ENCODE measurements at regions of chr2 and their contacts with region 1.

Region 1: DNA sequence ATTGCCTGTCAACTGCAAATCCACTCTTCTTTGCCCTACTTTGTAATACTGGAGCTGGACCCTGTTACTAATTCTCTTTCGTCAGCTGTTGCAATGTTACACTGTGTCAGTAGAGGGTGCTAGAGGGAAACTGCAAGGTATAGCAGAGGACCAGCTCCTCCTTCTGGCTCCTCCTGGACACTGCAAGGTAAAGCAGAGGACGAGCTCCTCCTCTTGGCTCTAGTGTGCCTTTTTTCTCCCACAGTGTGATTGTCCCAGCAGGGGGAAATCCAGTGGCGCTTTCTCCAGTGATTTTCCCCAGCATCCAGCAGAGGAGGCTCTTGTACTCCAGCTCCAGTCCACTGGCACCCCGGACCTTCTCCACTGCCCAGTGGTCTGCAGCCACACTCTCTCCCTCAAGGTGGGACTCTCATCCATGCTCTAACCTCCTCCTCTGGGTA is 95.6 kb downstream of the CAPN13 start:
- DNase-seq: peak; percentile 95
- H3K4me3 ChIP-seq: no peak overlapping the region
- H3K27ac ChIP-seq: no peak overlapping the region
- H3K4me1 ChIP-seq: no peaks in the 10 kb centered on the region
- H3K27me3 ChIP-seq: no peaks in the 10 kb centered on the region
- CTCF ChIP-seq: peak; percentile 95 to 98 (median 97)
- POLR2A ChIP-seq: no peak

Region 2: GRCh38 chr2:30178618-30179434 is 532.8 kb before region 1 on chr2:
- intact Hi-C with region 1: loop called (anchors 10 kb)
- DNase-seq: peak; percentile 81
- H3K4me3 ChIP-seq: no peak overlapping the region
- H3K27ac ChIP-seq: peak overlapping the region in 1 of 2 donors; percentile 60
- H3K4me1 ChIP-seq: peaks cover 8% of the 10 kb centered on the region
- H3K27me3 ChIP-seq: no peaks in the 10 kb centered on the region
- CTCF ChIP-seq: no peak
- POLR2A ChIP-seq: no peak

Region 3: GRCh38 chr2:30208452-30208851 is 503.2 kb before region 1 on chr2:
- intact Hi-C with region 1: loop called (anchors 10 kb)
- DNase-seq: peak; percentile 76
- H3K4me3 ChIP-seq: no peak overlapping the region
- H3K27ac ChIP-seq: no peak overlapping the region
- H3K4me1 ChIP-seq: peaks cover 4% of the 10 kb centered on the region
- H3K27me3 ChIP-seq: no peaks in the 10 kb centered on the region
- CTCF ChIP-seq: peak; percentile 79 to 89 (median 82)
- POLR2A ChIP-seq: no peak

Region 4: DNA sequence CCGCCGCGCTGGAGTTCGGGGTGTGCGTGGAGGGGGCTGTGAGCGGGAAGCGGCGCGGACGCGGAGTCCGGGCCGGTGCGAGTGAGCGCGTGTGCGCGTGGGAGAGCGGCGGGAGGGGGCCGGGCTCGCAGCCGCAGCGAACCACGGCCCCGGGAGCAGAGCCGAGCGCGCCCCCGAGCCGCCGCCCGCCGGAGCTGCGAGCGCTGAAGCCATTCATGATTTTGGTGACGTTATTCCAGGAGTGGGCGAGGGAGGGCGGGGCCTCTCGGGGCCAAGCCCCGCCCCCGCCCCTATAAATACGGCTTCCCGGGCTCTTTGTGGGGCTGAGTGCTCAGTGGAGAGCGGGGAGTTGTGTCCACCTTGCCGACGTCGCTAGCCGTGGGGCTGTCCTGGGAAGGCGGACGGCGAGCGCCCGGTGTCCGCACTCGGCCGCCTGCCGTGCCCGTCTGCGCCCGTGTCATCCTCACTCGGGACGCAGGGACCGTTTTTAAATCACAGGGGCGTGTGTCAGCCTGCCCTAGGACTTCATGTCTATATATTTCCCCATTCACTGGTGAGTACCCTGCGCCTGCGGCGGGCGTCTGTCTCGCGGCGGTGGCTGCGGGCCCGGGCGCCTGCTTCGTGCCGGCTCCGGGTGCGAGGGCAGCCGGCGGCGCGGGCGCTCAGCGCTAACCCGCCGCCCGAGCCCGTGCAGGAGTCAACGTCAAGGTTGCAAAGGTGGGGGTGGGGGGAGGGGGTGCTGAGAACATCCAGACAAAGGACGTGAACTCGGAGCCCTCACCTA is 480.3 kb before region 1 on chr2 and contains the start of gene LBH:
- intact Hi-C with region 1: loop called (anchors 10 kb)
- DNase-seq: peak; percentile 92
- H3K4me3 ChIP-seq: peak within 1 kb of the TSS; percentile 70 to 73
- H3K27ac ChIP-seq: peak within 1 kb of the TSS; percentile 57 to 88
- H3K4me1 ChIP-seq: peaks cover 13% of the 10 kb centered on the region
- H3K27me3 ChIP-seq: no peaks in the 10 kb centered on the region
- CTCF ChIP-seq: no peak
- POLR2A ChIP-seq: peak; percentile 77
- total RNA-seq, gene LBH: 23.9 to 32.1 TPM

Region 5: DNA sequence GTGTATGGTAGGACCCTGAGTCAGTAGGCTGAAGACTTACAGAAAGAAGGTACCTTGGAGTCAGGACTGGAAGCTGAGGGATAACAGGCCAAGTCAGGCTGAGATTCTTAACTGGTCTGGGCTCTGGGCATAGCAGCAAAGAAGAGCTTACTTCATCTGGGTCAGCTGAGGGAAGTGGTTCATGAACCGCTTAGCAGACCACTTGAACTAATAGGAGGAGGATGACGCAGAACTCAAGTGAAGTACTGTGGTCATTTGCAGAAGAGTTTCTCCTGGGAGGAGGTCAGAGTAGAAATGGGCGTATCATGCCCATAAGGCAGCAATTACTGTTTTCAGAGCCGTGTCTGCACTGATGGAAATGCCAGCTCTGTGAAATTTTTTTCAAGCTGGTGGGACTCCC is 100.1 kb before region 1 on chr2:
- intact Hi-C with region 1: no loop called
- DNase-seq: no peak
- H3K4me3 ChIP-seq: no peak overlapping the region
- H3K27ac ChIP-seq: no peak overlapping the region
- H3K4me1 ChIP-seq: no peaks in the 10 kb centered on the region
- H3K27me3 ChIP-seq: no peaks in the 10 kb centered on the region
- CTCF ChIP-seq: no peak
- POLR2A ChIP-seq: no peak

Region 6: GRCh38 chr2:31170071-31170698 is 458.5 kb after region 1 on chr2:
- intact Hi-C with region 1: loop called (anchors 10 kb)
- DNase-seq: peak; percentile 57
- H3K4me3 ChIP-seq: no peak overlapping the region
- H3K27ac ChIP-seq: no peak overlapping the region
- H3K4me1 ChIP-seq: no peaks in the 10 kb centered on the region
- H3K27me3 ChIP-seq: no peaks in the 10 kb centered on the region
- CTCF ChIP-seq: peak; percentile 70 to 83 (median 75)
- POLR2A ChIP-seq: no peak

Region 7: DNA sequence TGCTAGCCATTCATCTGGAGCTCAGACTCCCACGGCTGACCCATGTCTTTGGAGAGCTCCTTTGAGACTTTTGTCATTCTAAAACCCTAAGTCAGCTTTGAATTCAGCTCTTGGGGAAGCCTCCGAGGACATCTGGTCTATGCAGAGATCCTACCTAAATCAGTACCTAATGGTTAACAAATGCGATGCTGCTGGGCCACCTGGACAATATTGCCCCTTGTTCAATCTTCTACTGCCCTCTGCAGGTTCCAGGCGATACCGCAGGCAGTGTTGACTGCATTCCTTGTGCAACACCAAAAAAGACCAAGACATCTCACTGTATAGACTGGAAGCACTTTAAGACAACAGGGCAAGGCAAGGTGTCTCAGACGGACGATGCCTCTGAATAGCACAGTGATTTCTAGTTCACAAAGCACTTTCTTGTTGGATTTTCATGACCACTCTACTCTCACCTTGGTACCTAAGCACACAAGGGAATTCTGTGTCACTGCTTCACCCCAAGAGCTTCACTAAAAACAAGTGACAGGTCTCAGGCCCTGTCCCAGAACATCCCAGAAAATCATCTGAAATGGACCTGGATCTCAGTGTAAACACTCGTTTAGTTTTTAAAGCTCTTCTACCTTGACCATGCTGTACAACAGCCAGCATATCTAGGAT is 622.0 kb after region 1 on chr2:
- intact Hi-C with region 1: loop called (anchors 10 kb)
- DNase-seq: peak; percentile 86
- H3K4me3 ChIP-seq: no peak overlapping the region
- H3K27ac ChIP-seq: no peak overlapping the region
- H3K4me1 ChIP-seq: no peaks in the 10 kb centered on the region
- H3K27me3 ChIP-seq: no peaks in the 10 kb centered on the region
- CTCF ChIP-seq: peak; percentile 56 to 81 (median 69)
- POLR2A ChIP-seq: no peak